ENCODE measurements at regions of chr15 and their contacts with region 1.

Region 1: GRCh38 chr15:100721770-100722550 is 119.6 kb downstream of the ASB7 start:
- DNase-seq: peak; percentile 100
- H3K4me3 ChIP-seq: peak overlapping the region in 1 of 3 experiments; percentile 15
- H3K27ac ChIP-seq: peak overlapping the region; percentile 100
- H3K4me1 ChIP-seq: peaks cover 59% of the 10 kb centered on the region
- H3K27me3 ChIP-seq: no peaks in the 10 kb centered on the region
- CTCF ChIP-seq: no peak

Region 2: GRCh38 chr15:100394736-100395440 is 327.1 kb before region 1 on chr15:
- CTCF ChIA-PET with region 1: no interaction called
- dilution Hi-C with region 1: no loop called
- in situ Hi-C with region 1: no loop called
- intact Hi-C with region 1: no loop called
- DNase-seq: no peak
- H3K4me3 ChIP-seq: no peak overlapping the region
- H3K27ac ChIP-seq: no peak overlapping the region
- H3K4me1 ChIP-seq: no peaks in the 10 kb centered on the region
- H3K27me3 ChIP-seq: no peaks in the 10 kb centered on the region
- CTCF ChIP-seq: no peak

Region 3: GRCh38 chr15:100627789-100628395 is 94.1 kb before region 1 on chr15:
- CTCF ChIA-PET with region 1: no interaction called
- dilution Hi-C with region 1: no loop called
- in situ Hi-C with region 1: no loop called
- intact Hi-C with region 1: loop called (anchors 1 kb)
- DNase-seq: peak; percentile 64
- H3K4me3 ChIP-seq: no peak overlapping the region
- H3K27ac ChIP-seq: peak overlapping the region; percentile 5
- H3K4me1 ChIP-seq: no peaks in the 10 kb centered on the region
- H3K27me3 ChIP-seq: no peaks in the 10 kb centered on the region
- CTCF ChIP-seq: peak; percentile 73

Region 4: DNA sequence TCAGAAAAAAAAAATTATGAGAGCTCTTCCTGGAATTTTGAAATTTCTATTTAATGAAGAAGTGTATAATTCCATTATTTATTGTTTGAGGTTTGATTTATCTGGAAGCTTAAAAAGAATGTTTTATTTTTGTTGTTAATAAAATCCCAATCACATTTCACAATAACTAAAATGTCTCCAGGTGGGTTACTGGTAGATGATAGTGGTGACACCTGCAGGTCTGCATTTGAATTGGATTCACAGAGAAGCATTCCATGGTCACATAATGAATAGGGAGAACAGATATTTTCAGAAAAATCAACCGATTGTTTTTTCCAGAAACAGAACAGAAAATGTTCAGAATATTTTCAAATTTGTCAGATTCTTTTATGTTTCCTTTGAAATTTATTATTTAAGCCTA is 71.3 kb before region 1 on chr15:
- CTCF ChIA-PET with region 1: no interaction called
- dilution Hi-C with region 1: no loop called
- in situ Hi-C with region 1: no loop called
- intact Hi-C with region 1: loop called (anchors 5 kb)
- DNase-seq: no peak
- H3K4me3 ChIP-seq: no peak overlapping the region
- H3K27ac ChIP-seq: no peak overlapping the region
- H3K4me1 ChIP-seq: no peaks in the 10 kb centered on the region
- H3K27me3 ChIP-seq: no peaks in the 10 kb centered on the region
- CTCF ChIP-seq: peak; percentile 24 to 40

Region 5: GRCh38 chr15:100671858-100672543 is 50.0 kb before region 1 on chr15:
- CTCF ChIA-PET with region 1: no interaction called
- dilution Hi-C with region 1: no loop called
- in situ Hi-C with region 1: no loop called
- intact Hi-C with region 1: loop called (anchors 2 kb)
- DNase-seq: peak; percentile 49
- H3K4me3 ChIP-seq: no peak overlapping the region
- H3K27ac ChIP-seq: peak overlapping the region; percentile 37
- H3K4me1 ChIP-seq: peaks cover 7% of the 10 kb centered on the region
- H3K27me3 ChIP-seq: no peaks in the 10 kb centered on the region
- CTCF ChIP-seq: peak; percentile 44 to 66

Region 6: DNA sequence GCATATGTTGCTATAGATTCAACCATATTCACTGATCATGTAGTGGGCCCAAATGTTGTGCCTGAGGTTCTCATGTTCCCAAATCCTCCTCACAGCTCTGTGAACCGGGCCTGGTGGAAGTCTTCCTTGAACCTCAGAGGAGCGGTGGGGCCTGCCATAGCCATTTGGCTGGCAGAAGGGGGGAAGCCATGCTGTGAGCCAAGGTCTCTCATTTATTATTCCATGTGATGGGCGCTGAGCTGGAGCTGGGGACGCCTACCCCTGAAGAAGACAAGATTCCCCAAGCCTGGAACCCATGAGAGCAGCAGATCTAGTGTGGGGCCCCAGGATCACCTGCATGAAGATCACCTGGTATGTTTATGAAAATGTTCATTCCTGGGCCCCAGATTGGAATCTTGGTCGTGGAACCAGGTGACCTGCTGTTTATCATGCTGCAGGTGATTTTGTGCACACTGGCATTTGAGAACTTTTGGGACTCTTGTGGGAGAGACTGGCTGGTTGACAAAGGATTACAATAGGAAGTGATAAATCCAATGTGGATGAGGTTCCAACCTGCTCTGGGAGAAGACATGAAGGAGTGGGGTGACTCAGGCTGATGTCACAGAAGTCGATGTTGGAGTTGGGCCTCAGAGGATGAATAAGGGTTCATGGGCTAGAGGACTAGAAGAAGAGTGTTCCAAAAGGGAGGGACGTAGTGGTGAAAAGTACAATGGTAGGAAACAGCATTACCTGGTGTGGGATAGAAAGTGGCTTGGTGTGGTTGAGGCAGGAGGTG is 17.5 kb before region 1 on chr15:
- CTCF ChIA-PET with region 1: no interaction called
- dilution Hi-C with region 1: no loop called
- in situ Hi-C with region 1: no loop called
- intact Hi-C with region 1: loop called (anchors 1 kb)
- DNase-seq: peak; percentile 97
- H3K4me3 ChIP-seq: no peak overlapping the region
- H3K27ac ChIP-seq: peak overlapping the region; percentile 65
- H3K4me1 ChIP-seq: peaks cover 22% of the 10 kb centered on the region
- H3K27me3 ChIP-seq: no peaks in the 10 kb centered on the region
- CTCF ChIP-seq: no peak

Region 7: DNA sequence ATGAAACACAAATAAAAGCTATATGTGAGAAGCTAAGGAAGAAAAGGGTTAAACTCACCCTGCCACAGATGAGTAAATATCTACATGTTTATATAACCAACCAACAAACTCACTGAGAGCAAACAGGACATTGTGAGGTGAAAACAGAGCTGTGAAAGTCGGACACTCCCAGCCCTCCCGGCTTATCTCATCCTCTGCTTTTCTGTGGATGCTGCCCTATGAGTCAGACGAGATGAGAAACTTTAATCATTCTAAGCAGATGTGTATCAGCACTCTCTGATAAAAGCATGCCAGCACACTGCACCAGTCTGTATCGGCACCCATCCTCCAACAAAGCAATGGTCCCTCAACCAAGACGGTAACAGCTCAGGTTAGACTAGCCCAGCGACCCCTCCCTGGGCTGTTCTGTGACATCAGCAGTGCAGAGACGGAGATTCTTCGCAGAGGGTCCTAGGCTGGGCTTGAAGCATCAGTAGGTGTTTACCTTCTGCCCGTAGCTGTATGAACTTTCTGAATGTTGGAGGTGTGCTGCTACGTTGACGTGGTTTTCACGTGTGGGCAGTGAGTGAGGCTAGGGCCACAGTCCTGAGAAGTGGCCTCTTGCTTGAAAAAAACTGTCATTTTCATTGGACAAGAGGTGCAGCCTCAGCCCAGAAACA is 37.9 kb after region 1 on chr15:
- CTCF ChIA-PET with region 1: no interaction called
- dilution Hi-C with region 1: loop called (anchors 5 kb)
- in situ Hi-C with region 1: no loop called
- intact Hi-C with region 1: no loop called
- DNase-seq: peak; percentile 76
- H3K4me3 ChIP-seq: no peak overlapping the region
- H3K27ac ChIP-seq: no peak overlapping the region
- H3K4me1 ChIP-seq: peaks cover 7% of the 10 kb centered on the region
- H3K27me3 ChIP-seq: no peaks in the 10 kb centered on the region
- CTCF ChIP-seq: no peak

Measured in mammary epithelial cell (primary cell).